GM13976 (cell line): ENCODE measurements at regions of chr14 and their contacts with region 1.

Region 1: DNA sequence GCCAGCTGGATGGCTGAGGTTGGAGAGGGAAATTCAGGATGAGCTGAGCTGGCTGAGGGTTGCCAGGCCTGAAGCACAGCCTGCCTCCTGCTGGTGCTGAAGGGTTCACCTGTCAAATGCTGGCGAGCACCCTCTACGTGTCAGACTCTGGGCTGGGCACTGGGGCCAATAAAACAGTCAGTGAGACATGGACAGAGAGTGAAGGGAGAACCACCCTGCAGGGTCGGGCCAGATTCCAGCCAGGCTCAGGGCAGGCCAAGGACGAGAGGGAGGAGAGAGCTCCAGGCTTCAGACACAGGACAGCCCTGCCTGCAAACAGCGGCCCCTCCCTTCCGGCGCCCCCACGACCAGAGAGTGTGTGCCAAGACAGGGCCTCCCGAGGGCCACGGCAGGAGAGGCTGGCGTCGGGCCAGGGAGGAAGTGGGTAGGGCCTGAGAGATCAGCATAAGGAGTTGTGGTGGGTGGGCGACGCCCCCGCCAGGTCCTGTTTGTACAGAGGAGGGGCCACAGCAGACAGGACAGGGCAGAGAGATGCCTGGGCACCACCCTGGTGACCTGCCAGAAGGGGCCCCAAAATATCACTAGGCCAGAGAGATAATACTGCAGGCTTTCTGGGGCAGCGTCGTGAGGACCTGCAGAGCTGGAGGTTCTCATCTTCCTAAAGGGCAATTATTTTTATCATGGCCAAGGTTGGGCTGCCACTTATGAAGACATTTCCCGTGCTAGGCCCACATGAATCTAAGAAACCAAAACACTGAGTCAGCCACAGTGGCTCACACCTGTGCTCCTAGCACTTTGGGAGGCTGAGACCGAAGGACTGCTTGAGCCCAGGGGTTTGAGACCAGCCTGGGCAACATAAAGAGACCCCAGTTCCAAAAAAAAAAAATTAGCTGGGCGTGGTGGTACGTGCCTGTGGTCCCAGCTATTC is 73.1 kb upstream of the GPR68 start:
- DNase-seq: peak; percentile 55
- CTCF ChIP-seq: peak; percentile 7

Region 2: DNA sequence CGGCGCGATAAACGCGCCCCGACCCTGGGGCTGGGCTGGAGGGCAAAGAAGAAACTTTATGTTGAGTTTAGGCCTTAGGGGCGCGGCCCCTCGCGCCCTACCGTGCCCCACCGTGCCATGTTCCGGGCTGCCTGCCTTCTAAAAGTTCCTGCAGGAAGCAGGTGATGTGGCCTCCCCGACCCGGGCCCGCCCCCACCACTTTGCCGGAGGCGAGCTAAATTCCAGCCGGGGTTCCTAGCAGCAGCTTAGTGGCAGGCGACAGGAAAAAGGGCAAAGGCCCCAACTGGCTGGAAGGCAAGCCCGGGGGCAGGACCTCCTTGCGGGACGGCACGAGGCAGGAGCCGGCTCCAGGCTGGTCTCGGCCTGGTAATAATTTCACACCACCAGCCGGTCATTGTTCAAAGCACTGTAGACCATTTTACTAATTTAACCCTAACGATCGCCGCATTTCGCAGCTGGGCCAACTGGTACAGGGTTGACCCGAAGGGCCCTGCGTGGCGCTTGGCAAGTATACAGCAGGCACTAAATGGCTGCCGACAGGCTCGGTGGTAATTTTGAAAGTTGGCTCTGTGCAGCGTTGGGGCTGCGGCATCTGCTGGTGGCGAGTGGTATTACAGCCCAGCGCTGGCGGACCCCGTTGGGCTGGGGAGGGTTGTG is 100.9 kb after region 1 on chr14:
- in situ Hi-C with region 1: loop called (anchors 10 kb)
- DNase-seq: peak; percentile 63
- CTCF ChIP-seq: peak; percentile 94

Region 3: DNA sequence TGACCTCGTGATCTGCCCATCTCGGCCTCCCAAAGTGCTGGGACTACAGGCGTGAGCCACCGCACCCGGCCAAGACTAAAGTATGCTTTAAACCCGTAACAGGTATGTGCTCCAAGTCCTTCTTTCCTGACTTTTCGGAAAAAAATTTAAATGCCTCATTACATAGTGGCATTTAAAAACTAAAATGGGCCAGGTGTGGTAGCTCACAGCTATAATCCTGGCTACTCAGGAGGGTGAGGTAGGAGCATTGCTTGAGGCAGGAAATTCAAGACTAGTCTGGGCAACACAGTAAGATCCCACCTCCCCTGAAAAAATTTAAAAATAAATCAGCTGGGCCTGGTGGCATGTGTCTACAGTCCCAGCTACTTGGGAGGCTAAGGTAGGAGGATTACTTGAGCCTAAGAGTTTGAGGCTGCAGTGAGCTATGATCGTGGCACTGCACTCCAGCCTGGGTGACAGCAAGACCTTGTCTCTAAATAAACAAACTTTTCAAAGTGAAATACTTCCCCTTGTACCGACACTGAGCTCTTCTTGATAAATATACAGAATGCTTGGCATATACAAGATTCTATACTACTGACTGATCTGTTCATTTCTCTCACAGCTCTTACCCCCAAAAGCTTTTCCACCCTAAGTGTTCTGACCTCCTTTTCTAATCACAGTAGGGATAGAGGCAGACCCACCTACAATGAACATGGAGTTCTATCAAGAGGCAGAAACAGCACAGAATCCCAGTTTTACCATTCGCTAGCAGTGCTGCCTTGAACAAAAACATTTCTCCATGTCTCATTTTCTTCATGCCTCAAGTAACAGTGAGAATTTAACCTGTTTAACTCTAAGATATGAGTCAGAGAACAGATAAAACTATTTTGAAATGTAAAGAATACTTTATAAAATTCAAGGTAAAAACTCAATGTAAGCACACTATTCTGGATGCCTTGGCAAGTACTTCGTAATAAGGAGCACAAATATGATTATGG is 184.6 kb after region 1 on chr14:
- in situ Hi-C with region 1: no loop called
- DNase-seq: no peak
- CTCF ChIP-seq: no peak

Region 4: GRCh38 chr14:91536327-91536726 is 218.7 kb after region 1 on chr14:
- in situ Hi-C with region 1: no loop called
- DNase-seq: no peak
- CTCF ChIP-seq: no peak

Region 5: GRCh38 chr14:91835197-91836118 is 517.8 kb after region 1 on chr14:
- in situ Hi-C with region 1: no loop called
- DNase-seq: no peak
- CTCF ChIP-seq: no peak